ENCODE measurements at regions of chr16 and their contacts with region 1.

Region 1: GRCh38 chr16:75379911-75380847 is 53.1 kb downstream of the CFDP1 start:
- DNase-seq: peak; percentile 47
- H3K4me3 Mint-ChIP-seq: peak overlapping the region; percentile 5
- H3K27ac Mint-ChIP-seq: peak overlapping the region; percentile 20
- H3K4me1 Mint-ChIP-seq: peaks cover 49% of the 10 kb centered on the region
- H3K27me3 Mint-ChIP-seq: peaks cover 3% of the 10 kb centered on the region

Region 2: DNA sequence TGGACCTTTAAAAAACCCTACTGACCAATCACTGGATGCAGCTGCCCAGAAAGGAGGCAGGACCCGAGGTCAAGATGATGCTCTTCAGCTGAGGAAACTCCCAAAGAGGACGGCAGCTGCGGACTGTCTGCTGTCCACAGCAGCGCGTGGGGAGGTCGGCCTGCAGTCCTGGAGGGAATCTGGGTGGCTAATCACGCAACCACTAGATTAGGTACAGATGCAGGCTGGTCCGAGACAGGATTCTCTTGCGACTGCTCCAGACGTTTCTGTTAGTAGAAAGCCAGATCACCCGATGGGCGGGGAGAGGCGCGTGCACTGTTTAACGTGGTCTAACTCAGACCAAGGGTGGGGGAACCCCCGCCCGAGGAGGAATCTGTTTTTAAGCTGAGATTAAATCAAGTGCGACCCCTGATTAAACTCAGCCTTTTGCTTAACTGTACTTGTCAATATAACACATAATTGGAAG is 182.0 kb before region 1 on chr16:
- CTCF ChIA-PET with region 1: interaction called, 56 read pairs
- POLR2A ChIA-PET with region 1: no interaction called
- intact Hi-C with region 1: loop called (anchors 1 kb)
- DNase-seq: no peak
- H3K4me3 Mint-ChIP-seq: no peak overlapping the region
- H3K27ac Mint-ChIP-seq: no peak overlapping the region
- H3K4me1 Mint-ChIP-seq: peaks cover 9% of the 10 kb centered on the region
- H3K27me3 Mint-ChIP-seq: peaks cover 13% of the 10 kb centered on the region

Region 3: GRCh38 chr16:75218256-75219070 is 161.7 kb before region 1 on chr16 and contains the start of gene CTRB1:
- CTCF ChIA-PET with region 1: no interaction called
- POLR2A ChIA-PET with region 1: no interaction called
- intact Hi-C with region 1: loop called (anchors 5 kb)
- DNase-seq: peak; percentile 37
- H3K4me3 Mint-ChIP-seq: peak within 1 kb of the TSS; percentile 61
- H3K27ac Mint-ChIP-seq: peak within 1 kb of the TSS; percentile 75
- H3K4me1 Mint-ChIP-seq: peaks cover 10% of the 10 kb centered on the region
- H3K27me3 Mint-ChIP-seq: no peaks in the 10 kb centered on the region
- total RNA-seq, gene CTRB1: not detected

Region 4: DNA sequence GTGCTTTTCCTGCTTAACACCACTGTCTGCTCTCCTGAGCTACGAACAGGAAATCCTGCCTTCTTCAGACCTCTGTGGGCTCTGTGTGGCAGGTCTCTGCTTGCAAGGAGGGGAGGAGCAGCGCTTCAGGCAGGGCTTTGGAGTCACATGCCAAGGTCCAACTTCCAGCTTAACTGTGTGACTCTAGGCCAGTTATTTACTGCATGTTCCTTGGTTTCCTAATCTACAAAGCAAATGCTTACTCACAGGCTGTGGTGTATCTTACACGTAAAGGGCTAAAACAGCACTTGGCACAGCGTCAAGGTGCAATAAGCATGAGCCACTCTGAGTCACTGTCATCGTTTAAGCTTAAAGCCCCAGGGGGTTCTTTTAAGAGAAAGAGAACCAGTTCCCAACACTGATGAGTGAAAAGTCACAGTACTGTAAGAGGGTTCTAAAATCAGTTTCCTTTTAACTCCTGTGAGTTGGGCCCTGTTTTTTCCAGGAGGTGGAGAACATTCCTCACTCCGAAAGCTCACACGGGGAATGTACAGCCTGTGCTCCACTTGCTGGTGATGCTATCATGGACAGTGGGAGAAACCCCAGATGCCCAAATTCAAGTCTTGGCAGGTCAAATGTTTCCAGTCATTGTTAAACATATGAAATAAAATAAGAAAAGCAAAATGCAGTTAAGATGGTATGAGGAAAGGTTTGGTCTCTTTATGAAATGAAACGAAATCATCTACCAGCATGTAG is 74.6 kb before region 1 on chr16:
- CTCF ChIA-PET with region 1: no interaction called
- POLR2A ChIA-PET with region 1: interaction called, 3 read pairs
- intact Hi-C with region 1: loop called (anchors 1 kb)
- DNase-seq: peak; percentile 72
- H3K4me3 Mint-ChIP-seq: no peak overlapping the region
- H3K27ac Mint-ChIP-seq: peak overlapping the region; percentile 68
- H3K4me1 Mint-ChIP-seq: peaks cover 18% of the 10 kb centered on the region
- H3K27me3 Mint-ChIP-seq: no peaks in the 10 kb centered on the region

Region 5: DNA sequence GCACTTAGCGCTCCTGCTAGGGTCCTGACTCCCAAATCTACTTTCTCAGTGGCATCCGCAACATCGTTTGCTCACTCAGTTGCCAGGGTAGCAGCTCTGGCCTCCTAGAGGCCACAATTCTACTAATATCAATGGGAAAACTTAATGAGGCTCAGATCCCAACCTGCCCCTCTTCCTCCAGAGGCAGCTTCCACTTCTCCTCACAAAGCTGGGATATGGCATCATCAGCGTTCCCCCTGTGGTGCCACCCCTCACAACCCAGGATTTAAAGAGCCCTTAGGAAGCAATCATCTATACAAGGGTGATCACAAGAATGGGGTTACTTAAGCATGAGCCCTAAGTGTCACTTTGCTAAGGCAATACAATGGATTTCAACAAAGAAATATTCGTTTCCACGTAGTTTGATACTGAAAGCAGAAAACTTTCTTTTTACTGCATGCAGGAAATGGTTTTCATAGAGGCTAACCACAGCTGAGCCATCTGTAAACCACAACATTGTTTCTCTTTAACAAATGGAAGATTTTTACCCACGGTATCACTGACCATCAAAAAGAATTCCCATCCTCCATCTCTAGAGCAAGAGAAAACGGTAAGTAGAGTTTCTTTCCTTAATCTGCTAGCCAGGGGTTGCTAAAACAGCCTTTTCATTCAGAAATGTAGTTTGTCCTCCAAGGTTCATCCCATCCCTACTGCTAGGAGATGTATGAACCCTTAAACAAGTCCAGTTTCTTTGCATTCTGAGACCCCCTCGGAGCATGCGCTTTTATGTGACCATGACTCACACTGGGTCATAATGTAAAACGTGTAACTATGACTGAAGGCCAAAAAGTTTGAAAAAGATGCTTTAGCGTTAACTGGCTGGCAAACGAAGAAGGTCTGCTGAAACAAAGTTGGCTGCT is 60.4 kb before region 1 on chr16:
- CTCF ChIA-PET with region 1: interaction called, 4 read pairs
- POLR2A ChIA-PET with region 1: no interaction called
- intact Hi-C with region 1: loop called (anchors 1 kb)
- DNase-seq: no peak
- H3K4me3 Mint-ChIP-seq: no peak overlapping the region
- H3K27ac Mint-ChIP-seq: no peak overlapping the region
- H3K4me1 Mint-ChIP-seq: peaks cover 27% of the 10 kb centered on the region
- H3K27me3 Mint-ChIP-seq: peaks cover 2% of the 10 kb centered on the region

Region 6: DNA sequence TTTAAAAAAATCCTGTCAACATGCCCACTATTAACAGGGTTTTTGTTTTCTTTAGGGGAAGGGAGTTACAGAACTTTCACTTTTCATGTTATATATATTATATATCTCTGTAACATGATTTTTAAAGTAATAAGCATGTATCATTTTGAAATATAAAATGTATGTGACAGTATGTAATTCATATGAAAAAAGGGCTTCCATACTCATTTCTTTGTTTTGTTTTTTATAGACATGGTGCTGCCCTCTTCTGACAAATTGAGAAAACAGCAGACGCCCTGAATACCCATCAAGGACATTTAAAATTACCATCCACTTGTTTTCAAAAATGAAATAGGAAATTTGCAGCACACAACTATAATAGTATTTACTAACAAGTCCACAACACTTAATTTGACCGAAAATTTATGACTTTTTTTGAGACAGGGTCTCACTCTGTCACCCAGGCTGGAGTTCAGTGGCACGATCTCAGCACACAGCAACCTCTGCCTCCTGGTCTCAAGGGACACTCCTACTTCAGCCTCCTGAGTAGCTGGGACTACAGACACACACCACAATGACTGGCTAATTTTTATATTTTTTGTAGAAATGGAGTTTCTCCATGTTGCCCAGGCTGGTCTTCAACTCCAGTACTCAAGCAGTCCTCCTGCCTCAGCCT is 22.8 kb after region 1 on chr16:
- CTCF ChIA-PET with region 1: interaction called, 12 read pairs
- POLR2A ChIA-PET with region 1: interaction called, 3 read pairs
- intact Hi-C with region 1: loop called (anchors 2 kb)
- DNase-seq: no peak
- H3K4me3 Mint-ChIP-seq: no peak overlapping the region
- H3K27ac Mint-ChIP-seq: no peak overlapping the region
- H3K4me1 Mint-ChIP-seq: peaks cover 16% of the 10 kb centered on the region
- H3K27me3 Mint-ChIP-seq: no peaks in the 10 kb centered on the region

Region 7: GRCh38 chr16:75614066-75614897 is 234.1 kb after region 1 on chr16:
- CTCF ChIA-PET with region 1: no interaction called
- POLR2A ChIA-PET with region 1: no interaction called
- intact Hi-C with region 1: loop called (anchors 1 kb)
- DNase-seq: no peak
- H3K4me3 Mint-ChIP-seq: no peak overlapping the region
- H3K27ac Mint-ChIP-seq: no peak overlapping the region
- H3K4me1 Mint-ChIP-seq: peaks cover 33% of the 10 kb centered on the region
- H3K27me3 Mint-ChIP-seq: no peaks in the 10 kb centered on the region

Region 8: GRCh38 chr16:76370344-76370743 is 990.2 kb after region 1 on chr16:
- CTCF ChIA-PET with region 1: no interaction called
- POLR2A ChIA-PET with region 1: no interaction called
- intact Hi-C with region 1: no loop called
- DNase-seq: no peak
- H3K4me3 Mint-ChIP-seq: no peak overlapping the region
- H3K27ac Mint-ChIP-seq: no peak overlapping the region
- H3K4me1 Mint-ChIP-seq: no peaks in the 10 kb centered on the region
- H3K27me3 Mint-ChIP-seq: no peaks in the 10 kb centered on the region